ENCODE measurements at regions of chr6 and their contacts with region 1.

Region 1: DNA sequence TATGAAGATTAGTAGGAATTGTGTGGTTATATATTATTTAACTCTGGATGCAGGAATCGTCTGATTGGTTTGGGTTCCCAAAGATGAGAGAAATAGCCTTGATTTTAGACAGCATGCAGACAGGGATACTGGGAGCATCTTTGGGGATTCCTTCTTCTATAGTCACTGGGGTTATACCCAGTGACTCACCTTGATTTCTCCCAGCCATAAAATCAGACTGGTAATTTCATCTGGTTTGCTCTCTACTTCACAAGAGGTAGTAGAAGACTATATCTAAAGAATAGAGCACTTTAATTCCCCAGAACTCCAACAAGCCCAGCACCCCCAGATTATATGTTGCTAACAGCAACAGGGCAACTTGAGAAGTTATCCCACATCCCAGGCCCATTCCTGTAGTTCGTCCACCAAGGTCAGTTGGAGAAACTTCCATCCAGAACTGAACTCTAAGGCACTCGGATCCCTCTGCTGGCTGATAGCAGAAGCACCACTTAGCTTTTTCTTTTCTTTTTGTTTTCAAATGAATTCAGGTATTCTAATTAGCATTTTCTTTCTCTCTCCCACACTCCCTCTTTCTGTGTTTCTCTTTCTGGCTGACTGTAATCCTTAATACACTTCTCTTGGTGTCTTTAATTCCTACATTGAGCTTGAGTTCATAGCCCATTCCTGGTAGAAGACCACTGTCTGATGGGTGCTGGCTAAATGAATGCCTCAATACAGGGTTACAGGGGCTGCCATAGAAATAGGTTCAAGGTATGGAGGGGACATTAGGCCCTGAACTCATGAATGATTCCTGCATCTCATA is 20.4 kb upstream of the EFHC1 start:
- DNase-seq: peak in 7 of 9 donors; percentile 21 to 60 (median 48)
- ATAC-seq: peak; percentile 58
- H3K4me3 ChIP-seq: no peak overlapping the region
- H3K4me3 Mint-ChIP-seq: peak overlapping the region; percentile 26 to 84 (median 74)
- H3K27ac ChIP-seq: peak overlapping the region; percentile 89
- H3K27ac Mint-ChIP-seq: peak overlapping the region; percentile 91 to 100 (median 96)
- H3K4me1 ChIP-seq: peaks cover 48 to 70% of the 10 kb centered on the region in 2 donors
- H3K4me1 Mint-ChIP-seq: peaks cover 40 to 96% (median 77%) of the 10 kb centered on the region in 7 donors
- H3K27me3 ChIP-seq: no peaks in the 10 kb centered on the region
- H3K27me3 Mint-ChIP-seq: peaks cover 0 to 3% (median 0%) of the 10 kb centered on the region in 5 donors

Region 2: DNA sequence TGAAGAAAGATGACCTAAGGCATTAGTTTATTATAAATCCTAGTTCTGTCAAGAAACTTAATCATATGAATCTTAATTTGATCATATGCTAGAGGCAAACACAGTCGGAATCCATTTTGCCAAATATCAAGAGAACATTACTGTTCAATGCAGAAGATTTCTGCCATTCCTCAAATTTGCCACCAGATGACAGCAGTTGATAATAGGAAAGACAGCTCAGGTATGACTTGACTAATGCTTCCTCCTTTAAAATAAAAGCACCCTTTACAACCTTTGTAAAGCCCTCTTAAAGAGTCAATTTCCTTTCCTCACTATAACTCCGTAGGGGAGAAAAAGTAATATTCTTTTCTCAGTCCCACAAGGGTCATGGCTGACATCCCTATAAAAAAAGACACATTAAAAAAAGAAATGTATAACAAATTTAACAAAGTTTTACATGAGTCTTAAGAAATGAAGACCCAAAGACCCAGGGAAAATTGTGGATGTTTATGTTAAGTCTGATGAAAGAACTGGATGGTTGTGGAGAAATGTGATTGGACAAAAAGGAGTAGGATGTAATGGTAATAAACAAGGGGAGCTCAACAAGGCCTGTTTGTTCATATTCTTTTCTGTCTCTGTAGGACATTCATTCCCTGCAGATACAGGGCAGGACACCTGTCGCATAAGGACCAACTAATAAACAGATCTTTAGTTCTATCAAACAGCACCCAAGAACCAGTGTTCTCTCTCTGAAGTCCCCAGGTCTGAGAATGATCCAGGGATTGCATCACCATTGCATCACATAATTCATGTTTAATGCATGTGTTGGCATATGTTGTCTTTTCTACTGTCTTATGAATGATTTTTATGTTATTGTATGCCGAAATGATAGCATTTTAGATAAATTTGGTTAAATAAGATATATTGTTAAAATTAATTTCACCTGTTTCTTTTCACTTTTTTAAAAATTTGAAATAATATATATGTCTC is 236.5 kb before region 1 on chr6:
- CTCF ChIA-PET with region 1: no interaction called
- POLR2A ChIA-PET with region 1: no interaction called
- intact Hi-C with region 1: loop called (anchors 1 to 2 kb)
- DNase-seq: peak in 7 of 9 donors; percentile 5 to 49 (median 37)
- ATAC-seq: peak; percentile 62
- H3K4me3 ChIP-seq: no peak overlapping the region
- H3K4me3 Mint-ChIP-seq: no peak overlapping the region
- H3K27ac ChIP-seq: no peak overlapping the region
- H3K27ac Mint-ChIP-seq: peak overlapping the region in 1 of 9 donors; percentile 19
- H3K4me1 ChIP-seq: no peaks in the 10 kb centered on the region
- H3K4me1 Mint-ChIP-seq: peaks cover 0 to 9% (median 0%) of the 10 kb centered on the region in 7 donors
- H3K27me3 ChIP-seq: no peaks in the 10 kb centered on the region
- H3K27me3 Mint-ChIP-seq: peaks cover 6 to 26% (median 17%) of the 10 kb centered on the region in 5 donors

Region 3: GRCh38 chr6:52304983-52305390 is 94.7 kb before region 1 on chr6:
- CTCF ChIA-PET with region 1: interaction called, 7 read pairs
- POLR2A ChIA-PET with region 1: interaction called, 11 read pairs
- intact Hi-C with region 1: loop called (anchors 1 kb)
- DNase-seq: peak in 1 of 9 donors; percentile 5
- ATAC-seq: peak; percentile 62
- H3K4me3 ChIP-seq: peak overlapping the region; percentile 20
- H3K4me3 Mint-ChIP-seq: peak overlapping the region; percentile 38 to 84 (median 74)
- H3K27ac ChIP-seq: peak overlapping the region; percentile 64
- H3K27ac Mint-ChIP-seq: peak overlapping the region; percentile 68 to 98 (median 96)
- H3K4me1 ChIP-seq: peaks cover 53 to 69% of the 10 kb centered on the region in 2 donors
- H3K4me1 Mint-ChIP-seq: peaks cover 47 to 88% (median 78%) of the 10 kb centered on the region in 7 donors
- H3K27me3 ChIP-seq: no peaks in the 10 kb centered on the region
- H3K27me3 Mint-ChIP-seq: no peaks in the 10 kb centered on the region

Region 4: DNA sequence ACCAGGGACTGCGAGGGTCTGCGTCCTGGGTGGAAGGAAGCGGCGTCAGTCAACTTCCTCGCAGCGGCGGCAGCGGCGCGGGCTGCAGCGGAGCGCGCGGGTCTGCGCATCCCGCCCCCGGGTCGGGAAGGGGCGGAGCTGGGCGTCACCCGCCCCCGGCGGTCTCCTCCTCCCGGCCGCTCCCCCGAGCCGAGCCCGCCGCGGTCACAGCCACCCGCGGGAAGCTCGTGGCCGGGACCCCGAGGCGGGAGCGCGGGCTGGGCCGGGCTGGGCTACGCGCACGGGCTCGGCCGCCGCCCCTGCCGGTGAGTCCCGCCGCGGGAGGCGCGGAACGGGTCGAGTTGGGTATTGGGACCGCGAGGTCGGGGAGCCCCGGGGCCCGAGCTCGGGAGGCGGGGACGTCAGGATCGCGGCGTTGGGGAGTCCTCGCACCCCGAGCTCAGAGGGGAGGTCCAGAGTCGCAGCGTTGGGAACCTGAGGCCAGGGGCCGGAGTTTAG is 37.7 kb before region 1 on chr6 and contains the start of gene PAQR8:
- CTCF ChIA-PET with region 1: interaction called, 72 read pairs
- POLR2A ChIA-PET with region 1: interaction called, 29 read pairs
- intact Hi-C with region 1: loop called (anchors 1 kb)
- DNase-seq: peak; percentile 77 to 89 (median 86)
- ATAC-seq: peak; percentile 95
- H3K4me3 ChIP-seq: peak within 1 kb of the TSS; percentile 90
- H3K4me3 Mint-ChIP-seq: peak within 1 kb of the TSS; percentile 83 to 100 (median 98)
- H3K27ac ChIP-seq: peak within 1 kb of the TSS; percentile 86
- H3K27ac Mint-ChIP-seq: peak within 1 kb of the TSS; percentile 90 to 99 (median 94)
- H3K4me1 ChIP-seq: peaks cover 25 to 28% of the 10 kb centered on the region in 2 donors
- H3K4me1 Mint-ChIP-seq: peaks cover 25 to 55% (median 45%) of the 10 kb centered on the region in 7 donors
- H3K27me3 ChIP-seq: no peaks in the 10 kb centered on the region
- H3K27me3 Mint-ChIP-seq: peaks cover 0 to 9% (median 0%) of the 10 kb centered on the region in 5 donors
- total RNA-seq, gene PAQR8: 7.5 to 46.2 (median 21.6) TPM

Region 5: DNA sequence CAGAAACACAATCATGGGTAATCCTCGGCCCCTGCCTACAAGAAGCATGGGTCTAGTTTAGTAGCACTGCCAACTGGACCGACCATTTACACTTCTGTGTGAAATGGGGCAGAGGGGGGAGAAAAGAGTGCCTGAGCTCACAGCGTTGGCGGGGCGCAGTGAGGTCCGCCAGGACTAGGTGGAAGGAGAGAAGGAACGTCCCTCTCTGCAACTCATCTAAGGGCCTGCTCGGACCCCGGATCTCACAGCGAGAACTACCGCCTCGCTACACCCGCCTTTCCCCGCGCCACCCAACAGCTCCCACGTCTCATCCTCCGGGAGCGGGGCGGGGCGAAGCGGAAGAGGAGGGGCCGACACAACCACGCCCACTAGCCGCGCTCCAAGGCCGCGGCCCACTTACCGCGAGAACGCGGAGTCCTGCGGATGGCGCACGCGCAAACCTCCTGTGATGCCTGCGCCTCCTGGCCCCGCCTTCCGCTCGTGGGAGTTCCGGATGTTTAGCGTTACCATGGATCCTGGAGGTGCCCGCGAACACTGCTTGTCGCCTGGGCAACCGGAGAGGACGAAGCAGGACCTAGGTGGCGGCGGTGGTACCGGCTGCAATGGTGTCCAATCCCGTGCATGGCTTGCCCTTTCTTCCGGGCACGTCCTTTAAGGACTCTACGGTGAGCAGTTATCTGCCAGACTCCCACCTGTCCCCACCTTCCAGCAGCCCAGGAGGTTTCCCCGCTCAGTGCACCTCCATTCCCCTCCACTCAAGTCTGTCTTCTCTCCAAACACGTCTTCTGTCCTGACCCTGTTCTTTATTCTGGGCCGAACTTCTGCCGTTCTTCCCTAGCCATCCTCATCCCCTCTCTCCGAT is 20.3 kb after region 1 on chr6 and contains the start of gene EFHC1:
- CTCF ChIA-PET with region 1: interaction called, 83 read pairs
- POLR2A ChIA-PET with region 1: interaction called, 20 read pairs
- intact Hi-C with region 1: loop called (anchors 1 kb)
- DNase-seq: peak; percentile 95 to 98 (median 97)
- ATAC-seq: peak; percentile 97
- H3K4me3 ChIP-seq: peak within 1 kb of the TSS; percentile 73
- H3K4me3 Mint-ChIP-seq: no peak within 1 kb of the TSS
- H3K27ac ChIP-seq: peak within 1 kb of the TSS; percentile 72
- H3K27ac Mint-ChIP-seq: peak within 1 kb of the TSS in 1 of 9 donors; percentile 96
- H3K4me1 ChIP-seq: peaks cover 13 to 19% of the 10 kb centered on the region in 2 donors
- H3K4me1 Mint-ChIP-seq: peaks cover 10 to 31% (median 24%) of the 10 kb centered on the region in 7 donors
- H3K27me3 ChIP-seq: no peaks in the 10 kb centered on the region
- H3K27me3 Mint-ChIP-seq: peaks cover 0 to 5% (median 0%) of the 10 kb centered on the region in 5 donors
- total RNA-seq, gene EFHC1: 2.4 to 13.8 (median 6.0) TPM

Region 6: GRCh38 chr6:52881996-52882841 is 482.5 kb after region 1 on chr6:
- CTCF ChIA-PET with region 1: no interaction called
- POLR2A ChIA-PET with region 1: no interaction called
- intact Hi-C with region 1: no loop called
- DNase-seq: peak; percentile 29 to 74 (median 61)
- ATAC-seq: peak; percentile 99
- H3K4me3 ChIP-seq: peak overlapping the region; percentile 57
- H3K4me3 Mint-ChIP-seq: peak overlapping the region; percentile 85 to 92 (median 88)
- H3K27ac ChIP-seq: no peak overlapping the region
- H3K27ac Mint-ChIP-seq: peak overlapping the region in 8 of 9 donors; percentile 7 to 86 (median 58)
- H3K4me1 ChIP-seq: no peaks in the 10 kb centered on the region
- H3K4me1 Mint-ChIP-seq: peaks cover 0 to 13% (median 0%) of the 10 kb centered on the region in 7 donors
- H3K27me3 ChIP-seq: no peaks in the 10 kb centered on the region
- H3K27me3 Mint-ChIP-seq: no peaks in the 10 kb centered on the region